ENCODE measurements at regions of chr14 and their contacts with region 1.

Region 1: DNA sequence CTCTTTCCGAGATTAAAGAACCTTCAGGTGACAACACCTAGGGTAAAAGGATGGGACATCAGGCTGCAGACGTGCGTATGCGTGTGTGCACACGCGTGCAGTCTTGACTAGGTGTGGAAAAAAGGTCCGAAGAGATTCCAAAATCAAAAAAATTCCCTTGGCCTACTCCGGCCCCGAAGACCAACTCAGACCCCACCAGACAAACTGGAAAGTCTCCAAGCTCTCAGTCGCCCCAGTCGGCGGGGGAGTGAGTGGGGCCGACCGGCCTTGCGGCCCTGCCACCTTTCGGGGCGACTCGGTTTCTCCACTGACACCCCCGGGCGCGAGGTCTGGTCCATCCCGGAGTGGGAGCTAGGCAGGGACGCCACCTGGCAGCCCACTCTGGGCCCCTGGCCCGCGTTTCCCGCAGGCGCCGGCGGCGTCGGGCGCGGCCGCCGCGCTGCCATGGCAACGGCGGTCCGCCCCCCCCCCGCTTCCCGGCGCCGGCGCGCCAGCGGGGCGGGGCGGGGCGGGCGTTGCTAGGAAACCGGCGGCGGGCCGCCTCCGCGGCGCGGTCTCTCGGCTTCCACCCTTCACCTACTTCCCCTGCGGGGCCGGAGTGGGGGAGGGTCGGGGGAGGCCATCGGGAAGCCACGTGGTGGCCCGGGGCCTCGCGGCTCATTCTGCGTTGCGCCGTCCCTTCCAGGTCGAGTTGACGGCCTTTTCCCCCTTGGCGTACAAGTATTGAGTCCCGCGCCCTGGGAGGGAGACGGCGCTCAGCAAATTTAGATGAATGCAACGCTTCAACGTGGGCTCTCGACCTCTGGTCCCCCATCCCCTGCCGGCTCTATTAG is 253.1 kb downstream of the EFCAB11 start:
- DNase-seq: peak; percentile 92
- H3K4me3 ChIP-seq: peak overlapping the region; percentile 45 to 74 (median 54)
- H3K27ac ChIP-seq: peak overlapping the region; percentile 77 to 80 (median 79)
- H3K4me1 ChIP-seq: peaks cover 7 to 20% (median 10%) of the 10 kb centered on the region in 4 donors
- H3K27me3 ChIP-seq: no peaks in the 10 kb centered on the region
- CTCF ChIP-seq: no peak
- EP300 ChIP-seq: no peak
- POLR2A ChIP-seq: no peak

Region 2: DNA sequence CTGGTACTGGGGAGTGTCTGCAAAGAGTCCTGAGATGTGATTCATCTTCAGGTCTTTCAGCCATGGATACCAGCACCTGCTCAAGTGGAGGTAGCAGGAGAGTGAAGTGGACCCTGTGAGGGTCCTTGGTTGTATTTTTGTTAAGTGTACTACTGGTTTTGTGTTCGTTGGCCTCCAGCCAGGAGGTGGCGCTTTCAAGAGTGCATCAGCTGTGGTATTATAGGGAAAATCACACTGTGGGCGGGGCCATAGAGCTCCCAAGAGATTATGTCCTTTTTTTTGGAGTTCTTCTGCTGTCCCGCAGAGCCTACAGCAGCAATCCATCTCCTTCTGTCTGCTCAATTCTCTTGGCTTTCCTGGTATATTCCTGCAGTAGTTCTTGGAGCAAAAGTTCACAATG is 1249.2 kb before region 1 on chr14:
- in situ Hi-C with region 1: no loop called
- intact Hi-C with region 1: no loop called
- DNase-seq: no peak
- H3K4me3 ChIP-seq: no peak overlapping the region
- H3K27ac ChIP-seq: no peak overlapping the region
- H3K4me1 ChIP-seq: no peaks in the 10 kb centered on the region
- H3K27me3 ChIP-seq: no peaks in the 10 kb centered on the region
- CTCF ChIP-seq: no peak
- EP300 ChIP-seq: no peak
- POLR2A ChIP-seq: no peak

Region 3: GRCh38 chr14:91286530-91286937 is 1585.1 kb after region 1 on chr14:
- in situ Hi-C with region 1: no loop called
- intact Hi-C with region 1: loop called (anchors 5 kb)
- DNase-seq: peak; percentile 77
- H3K4me3 ChIP-seq: no peak overlapping the region
- H3K27ac ChIP-seq: no peak overlapping the region
- H3K4me1 ChIP-seq: peaks cover 0 to 14% (median 6%) of the 10 kb centered on the region in 4 donors
- H3K27me3 ChIP-seq: no peaks in the 10 kb centered on the region
- CTCF ChIP-seq: peak; percentile 86 to 91 (median 89)
- EP300 ChIP-seq: no peak
- POLR2A ChIP-seq: no peak

Measured in transverse colon (tissue), 4 donors.